ENCODE measurements at regions of chr5 and their contacts with region 1.

Region 1: GRCh38 chr5:14264604-14265316 is 121.6 kb downstream of the TRIO start:
- DNase-seq: peak; percentile 93
- H3K4me3 ChIP-seq: peak overlapping the region; percentile 10 to 18
- H3K27ac ChIP-seq: peak overlapping the region; percentile 47 to 66
- H3K4me1 ChIP-seq: peaks cover 12 to 14% of the 10 kb centered on the region in 2 donors
- H3K27me3 ChIP-seq: no peaks in the 10 kb centered on the region
- CTCF ChIP-seq: no peak
- POLR2A ChIP-seq: peak; percentile 52 to 78

Region 2: DNA sequence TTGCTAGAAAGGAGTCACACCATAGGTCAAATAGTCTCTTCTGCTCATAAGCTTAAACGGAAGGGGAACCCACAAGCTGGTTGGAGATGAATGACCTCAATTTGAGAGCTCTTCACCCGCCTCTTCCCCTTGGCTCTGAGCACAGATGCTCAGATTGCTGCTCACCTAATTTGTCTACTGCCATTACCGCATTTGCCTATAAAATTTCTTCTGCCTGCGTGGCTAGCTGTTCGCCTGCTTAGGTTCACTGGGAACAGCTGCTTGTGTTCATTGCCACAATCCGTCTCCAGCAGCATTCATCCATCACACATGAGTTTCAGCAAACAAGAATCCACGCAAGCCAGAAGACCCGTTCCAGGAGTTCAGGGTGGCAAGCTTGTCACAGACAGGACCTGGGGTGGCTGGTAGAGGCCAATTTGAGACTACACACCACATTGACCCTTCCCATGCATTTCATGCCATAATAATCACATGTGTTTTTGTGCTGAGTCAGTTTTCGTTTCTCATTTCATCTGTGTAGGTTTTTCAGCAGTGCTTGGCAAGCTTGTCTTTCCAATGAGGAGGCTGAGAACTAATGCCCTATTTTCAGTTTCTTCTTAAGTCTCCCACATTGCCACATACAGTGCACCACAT is 270.0 kb before region 1 on chr5:
- intact Hi-C with region 1: no loop called
- DNase-seq: no peak
- H3K4me3 ChIP-seq: no peak overlapping the region
- H3K27ac ChIP-seq: no peak overlapping the region
- H3K4me1 ChIP-seq: no peaks in the 10 kb centered on the region
- H3K27me3 ChIP-seq: no peaks in the 10 kb centered on the region
- CTCF ChIP-seq: no peak
- POLR2A ChIP-seq: no peak

Region 3: GRCh38 chr5:14086261-14086660 is 178.5 kb before region 1 on chr5:
- intact Hi-C with region 1: no loop called
- DNase-seq: no peak
- H3K4me3 ChIP-seq: no peak overlapping the region
- H3K27ac ChIP-seq: no peak overlapping the region
- H3K4me1 ChIP-seq: no peaks in the 10 kb centered on the region
- H3K27me3 ChIP-seq: no peaks in the 10 kb centered on the region
- CTCF ChIP-seq: no peak
- POLR2A ChIP-seq: no peak

Region 4: GRCh38 chr5:14142827-14143548 is 121.8 kb before region 1 on chr5 and contains the start of gene TRIO:
- intact Hi-C with region 1: loop called (anchors 5 kb)
- DNase-seq: peak; percentile 94 to 96
- H3K4me3 ChIP-seq: peak within 1 kb of the TSS; percentile 57 to 95
- H3K27ac ChIP-seq: peak within 1 kb of the TSS; percentile 98 to 99
- H3K4me1 ChIP-seq: peaks cover 8 to 14% of the 10 kb centered on the region in 2 donors
- H3K27me3 ChIP-seq: no peaks in the 10 kb centered on the region
- CTCF ChIP-seq: peak; percentile 47 to 62 (median 51)
- POLR2A ChIP-seq: peak; percentile 58 to 69
- total RNA-seq, gene TRIO: 93.5 to 234 (median 207) TPM

Region 5: GRCh38 chr5:14156650-14157493 is 107.9 kb before region 1 on chr5:
- intact Hi-C with region 1: no loop called
- DNase-seq: peak in 1 of 2 donors; percentile 63
- H3K4me3 ChIP-seq: peak overlapping the region; percentile 14 to 29
- H3K27ac ChIP-seq: peak overlapping the region; percentile 85 to 92
- H3K4me1 ChIP-seq: peaks cover 16 to 32% of the 10 kb centered on the region in 2 donors
- H3K27me3 ChIP-seq: no peaks in the 10 kb centered on the region
- CTCF ChIP-seq: no peak
- POLR2A ChIP-seq: peak in 1 of 2 donors; percentile 11

Measured in uterus (tissue), 4 donors.